AG04449 (cell line): ENCODE measurements at regions of chr4 and their contacts with region 1.

Region 1: DNA sequence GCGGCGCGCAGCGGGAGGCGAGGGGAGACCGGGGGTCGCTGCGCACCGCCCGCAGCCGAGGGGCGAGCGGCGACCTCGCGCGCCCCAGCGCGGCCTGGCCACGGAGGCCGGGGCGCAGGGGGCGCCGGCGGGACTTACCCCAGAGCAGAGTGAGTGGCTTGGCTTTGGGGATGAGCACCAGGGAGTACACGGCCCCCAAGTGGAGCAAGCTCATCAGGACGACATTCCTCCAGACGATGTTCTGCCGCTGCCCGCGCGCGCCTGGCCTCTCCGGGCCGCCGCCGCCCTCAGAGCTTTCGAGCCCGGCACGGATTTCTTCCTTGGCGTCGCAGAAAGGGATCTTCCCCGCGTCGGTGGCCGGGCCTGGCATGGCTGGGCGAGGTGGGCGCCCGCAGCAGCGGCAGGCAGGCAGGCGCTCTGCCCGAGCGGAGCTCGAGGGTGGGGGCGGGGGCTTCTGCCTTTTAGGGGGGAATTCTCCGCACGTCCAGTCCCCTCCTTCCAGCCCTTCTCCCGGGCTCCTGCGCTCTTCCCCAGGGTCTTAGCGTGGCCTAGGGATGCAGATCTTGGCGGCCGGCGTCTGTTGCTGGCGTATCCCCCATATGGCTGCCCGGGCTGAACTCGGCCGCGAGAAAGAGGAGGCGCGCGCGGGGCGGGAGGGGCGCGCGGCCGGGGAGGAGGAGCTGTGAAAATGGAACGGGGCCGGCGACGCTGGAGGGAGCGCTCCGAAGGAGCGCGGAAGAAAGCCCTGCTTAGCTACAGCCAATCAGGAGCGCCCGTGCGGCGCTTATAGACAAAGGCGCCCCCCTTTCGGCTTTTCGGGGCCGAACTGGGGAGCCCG is at the start of gene SCD5:
- DNase-seq: peak; percentile 34
- H3K4me3 ChIP-seq: peak within 1 kb of the TSS; percentile 81
- CTCF ChIP-seq: no peak

Region 2: GRCh38 chr4:82661181-82661992 is 137.0 kb before region 1 on chr4:
- CTCF ChIA-PET with region 1: no interaction called
- POLR2A ChIA-PET with region 1: no interaction called
- DNase-seq: no peak
- H3K4me3 ChIP-seq: no peak overlapping the region
- CTCF ChIP-seq: no peak

Region 3: GRCh38 chr4:82785611-82786400 is 12.6 kb before region 1 on chr4:
- CTCF ChIA-PET with region 1: interaction called, 17 read pairs
- POLR2A ChIA-PET with region 1: interaction called, 21 read pairs
- DNase-seq: no peak
- H3K4me3 ChIP-seq: peak overlapping the region; percentile 43
- CTCF ChIP-seq: no peak

Region 4: GRCh38 chr4:83043801-83044407 is 245.5 kb after region 1 on chr4:
- CTCF ChIA-PET with region 1: no interaction called
- POLR2A ChIA-PET with region 1: no interaction called
- DNase-seq: peak; percentile 28
- H3K4me3 ChIP-seq: no peak overlapping the region
- CTCF ChIP-seq: no peak